Activated naive CD4-positive, alpha-beta T cell treated with anti-CD3 and anti-CD28 coated beads for 36 hours (primary cell): ENCODE measurements at regions of chr17 and their contacts with region 1.

Region 1: GRCh38 chr17:63741221-63742049 is at the start of gene STRADA:
- DNase-seq: peak; percentile 100
- H3K4me3 Mint-ChIP-seq: peak within 1 kb of the TSS; percentile 95
- H3K27ac Mint-ChIP-seq: peak within 1 kb of the TSS; percentile 99
- H3K4me1 Mint-ChIP-seq: peaks cover 20% of the 10 kb centered on the region
- H3K27me3 Mint-ChIP-seq: no peaks in the 10 kb centered on the region
- total RNA-seq, gene STRADA: 73.2 to 76.3 TPM

Region 2: DNA sequence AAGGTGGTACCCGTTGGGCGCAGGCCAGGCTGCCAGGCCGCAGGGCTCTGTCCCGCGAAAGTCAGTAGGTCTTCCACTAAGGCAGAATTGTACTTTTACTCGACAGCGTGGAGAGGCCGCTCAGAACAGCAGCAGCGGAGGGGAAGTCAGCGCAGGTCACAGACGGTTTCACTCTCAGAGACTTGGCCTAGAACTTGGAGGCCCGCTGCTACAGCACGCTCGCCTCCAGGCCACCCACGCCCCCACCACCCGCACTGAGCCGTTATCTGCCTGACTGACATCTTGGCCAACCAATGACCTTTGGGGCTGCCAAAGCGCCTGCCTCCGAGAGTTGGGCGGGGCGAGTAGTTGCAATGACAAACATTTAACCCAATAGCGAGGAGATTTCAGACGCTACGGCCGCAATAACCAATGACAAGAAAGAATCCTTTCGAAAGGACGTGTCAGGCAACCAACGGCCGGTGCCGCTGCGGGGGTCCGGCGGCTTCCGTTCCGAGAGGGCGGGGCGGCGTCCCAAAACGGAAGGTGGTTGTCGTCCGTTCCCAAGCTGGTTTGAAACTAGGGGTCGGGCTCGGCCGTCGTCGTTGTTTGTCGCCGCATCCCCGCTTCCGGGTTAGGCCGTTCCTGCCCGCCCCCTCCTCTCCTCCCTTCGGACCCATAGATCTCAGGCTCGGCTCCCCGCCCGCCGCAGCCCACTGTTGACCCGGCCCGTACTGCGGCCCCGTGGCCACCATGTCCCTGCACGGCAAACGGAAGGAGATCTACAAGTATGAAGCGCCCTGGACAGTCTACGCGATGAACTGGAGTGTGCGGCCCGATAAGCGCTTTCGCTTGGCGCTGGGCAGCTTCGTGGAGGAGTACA is 191.3 kb before region 1 on chr17 and contains the start of gene DCAF7:
- CTCF ChIA-PET with region 1: no interaction called
- intact Hi-C with region 1: loop called (anchors 1 kb)
- DNase-seq: peak; percentile 100
- H3K4me3 Mint-ChIP-seq: peak within 1 kb of the TSS; percentile 82
- H3K27ac Mint-ChIP-seq: peak within 1 kb of the TSS; percentile 94
- H3K4me1 Mint-ChIP-seq: peaks cover 33% of the 10 kb centered on the region
- H3K27me3 Mint-ChIP-seq: no peaks in the 10 kb centered on the region
- total RNA-seq, gene DCAF7: 102 to 103 TPM

Region 3: GRCh38 chr17:63751806-63752205 is 10.4 kb after region 1 on chr17:
- CTCF ChIA-PET with region 1: no interaction called
- intact Hi-C with region 1: loop called (anchors 1 kb)
- DNase-seq: peak; percentile 72
- H3K4me3 Mint-ChIP-seq: peak overlapping the region; percentile 62
- H3K27ac Mint-ChIP-seq: peak overlapping the region; percentile 84
- H3K4me1 Mint-ChIP-seq: peaks cover 13% of the 10 kb centered on the region
- H3K27me3 Mint-ChIP-seq: no peaks in the 10 kb centered on the region

Region 4: GRCh38 chr17:63773381-63774140 is 32.1 kb after region 1 on chr17 and contains the start of gene CCDC47:
- CTCF ChIA-PET with region 1: interaction called, 4 read pairs
- intact Hi-C with region 1: loop called (anchors 1 kb)
- DNase-seq: peak; percentile 99
- H3K4me3 Mint-ChIP-seq: peak within 1 kb of the TSS; percentile 98
- H3K27ac Mint-ChIP-seq: peak within 1 kb of the TSS; percentile 100
- H3K4me1 Mint-ChIP-seq: peaks cover 58% of the 10 kb centered on the region
- H3K27me3 Mint-ChIP-seq: no peaks in the 10 kb centered on the region
- total RNA-seq, gene CCDC47: 40.5 to 42.1 TPM

Region 5: DNA sequence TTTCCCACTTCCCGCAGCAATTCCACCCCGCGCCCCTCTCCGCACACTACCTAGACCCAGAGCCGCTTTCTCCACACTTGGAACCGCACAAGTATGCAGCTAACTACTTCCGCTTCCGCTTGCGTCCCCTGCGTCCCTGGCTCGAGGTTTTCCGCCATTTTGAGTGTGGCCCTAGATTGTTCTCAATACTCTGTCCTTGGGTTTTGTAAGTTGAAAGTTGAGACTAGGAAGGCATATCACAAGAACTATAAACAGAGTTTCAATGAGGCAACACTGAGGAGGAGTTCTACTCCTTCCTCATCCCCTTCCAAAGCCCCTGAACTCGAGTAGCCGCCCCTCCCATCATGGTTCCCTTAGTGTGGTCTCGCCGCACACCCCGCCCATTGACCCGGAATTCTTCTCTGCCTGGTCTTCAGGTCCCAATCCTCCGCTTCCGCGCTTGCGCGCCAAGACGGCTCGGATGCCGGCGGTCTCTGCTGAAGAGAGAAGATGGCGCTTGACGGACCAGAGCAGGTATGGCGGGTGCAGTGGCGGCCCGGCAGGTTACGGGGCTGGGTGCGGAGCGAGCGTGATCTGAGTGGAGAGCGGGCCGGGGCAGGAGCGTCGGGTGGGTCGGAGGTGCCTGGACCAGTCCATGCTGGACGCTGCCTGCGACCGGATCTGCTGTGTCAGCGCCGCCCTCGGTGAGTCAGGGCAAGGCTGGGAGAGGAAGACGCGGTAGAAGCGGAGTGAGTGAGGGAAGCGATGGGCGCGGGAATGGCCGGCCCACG is 85.8 kb after region 1 on chr17 and contains the starts of genes FTSJ3 and PSMC5:
- CTCF ChIA-PET with region 1: interaction called, 5 read pairs
- intact Hi-C with region 1: loop called (anchors 1 kb)
- DNase-seq: peak; percentile 97
- H3K4me3 Mint-ChIP-seq: peak within 1 kb of the TSS; percentile 96
- H3K27ac Mint-ChIP-seq: peak within 1 kb of the TSS; percentile 99
- H3K4me1 Mint-ChIP-seq: peaks cover 82% of the 10 kb centered on the region
- H3K27me3 Mint-ChIP-seq: no peaks in the 10 kb centered on the region
- total RNA-seq, gene FTSJ3: 25.3 to 26.2 TPM
- total RNA-seq, gene PSMC5: 144 to 154 TPM

Region 6: GRCh38 chr17:63842540-63843386 is 101.3 kb after region 1 on chr17 and contains the start of gene SMARCD2:
- CTCF ChIA-PET with region 1: no interaction called
- intact Hi-C with region 1: loop called (anchors 1 kb)
- DNase-seq: peak; percentile 100
- H3K4me3 Mint-ChIP-seq: peak within 1 kb of the TSS; percentile 94
- H3K27ac Mint-ChIP-seq: peak within 1 kb of the TSS; percentile 94
- H3K4me1 Mint-ChIP-seq: peaks cover 40% of the 10 kb centered on the region
- H3K27me3 Mint-ChIP-seq: no peaks in the 10 kb centered on the region
- total RNA-seq, gene SMARCD2: 98.5 to 107 TPM

Region 7: DNA sequence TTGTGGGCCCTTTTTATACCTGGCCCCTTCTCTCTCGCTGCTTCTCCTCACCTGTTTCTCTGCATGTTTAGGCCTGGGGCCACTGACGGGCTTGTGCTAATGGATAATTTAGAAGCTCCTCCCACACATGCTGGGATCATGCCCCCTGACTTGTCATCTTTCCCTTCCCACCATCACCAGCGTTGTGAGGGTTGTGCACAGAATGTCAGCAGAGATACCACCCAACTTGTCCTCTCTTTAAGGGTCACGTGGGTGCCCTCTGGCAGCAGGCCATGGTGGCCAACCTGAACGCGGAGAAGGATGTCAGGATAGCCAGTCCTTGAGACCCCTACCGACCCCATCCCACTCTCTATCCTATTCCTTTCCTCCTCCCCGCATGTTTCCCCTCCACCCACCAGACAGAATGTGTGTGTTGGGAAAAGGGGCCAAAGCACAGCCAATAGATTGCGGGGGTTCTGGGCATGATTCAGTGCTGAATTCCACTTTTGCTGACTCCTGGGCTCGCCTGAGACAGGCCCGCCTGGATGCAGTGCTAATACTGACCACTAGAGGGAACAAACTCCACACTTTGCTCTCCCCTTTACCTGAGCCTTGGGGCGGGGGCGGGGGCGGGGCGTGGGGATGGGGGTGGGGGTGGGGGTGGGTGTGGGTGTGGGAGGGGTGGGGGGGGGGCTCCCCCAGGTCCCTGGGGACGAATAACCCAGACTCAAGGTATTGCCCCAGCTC is 140.6 kb after region 1 on chr17 and contains the start of gene GH2:
- CTCF ChIA-PET with region 1: no interaction called
- intact Hi-C with region 1: no loop called
- DNase-seq: peak; percentile 79
- H3K4me3 Mint-ChIP-seq: no peak within 1 kb of the TSS
- H3K27ac Mint-ChIP-seq: no peak within 1 kb of the TSS
- H3K4me1 Mint-ChIP-seq: peaks cover 2% of the 10 kb centered on the region
- H3K27me3 Mint-ChIP-seq: no peaks in the 10 kb centered on the region
- total RNA-seq, gene GH2: not detected